Right cardiac atrium (tissue), 5 donors: ENCODE measurements at regions of chr16 and their contacts with region 1.

Region 1: GRCh38 chr16:56041686-56042085 is 149.6 kb upstream of the GNAO1 start:
- DNase-seq: peak in 2 of 3 donors; percentile 43 to 48
- ATAC-seq: peak; percentile 74
- H3K4me3 ChIP-seq: no peak overlapping the region
- H3K27ac ChIP-seq: no peak overlapping the region
- H3K4me1 ChIP-seq: peaks cover 3% of the 10 kb centered on the region
- H3K27me3 ChIP-seq: no peaks in the 10 kb centered on the region

Region 2: DNA sequence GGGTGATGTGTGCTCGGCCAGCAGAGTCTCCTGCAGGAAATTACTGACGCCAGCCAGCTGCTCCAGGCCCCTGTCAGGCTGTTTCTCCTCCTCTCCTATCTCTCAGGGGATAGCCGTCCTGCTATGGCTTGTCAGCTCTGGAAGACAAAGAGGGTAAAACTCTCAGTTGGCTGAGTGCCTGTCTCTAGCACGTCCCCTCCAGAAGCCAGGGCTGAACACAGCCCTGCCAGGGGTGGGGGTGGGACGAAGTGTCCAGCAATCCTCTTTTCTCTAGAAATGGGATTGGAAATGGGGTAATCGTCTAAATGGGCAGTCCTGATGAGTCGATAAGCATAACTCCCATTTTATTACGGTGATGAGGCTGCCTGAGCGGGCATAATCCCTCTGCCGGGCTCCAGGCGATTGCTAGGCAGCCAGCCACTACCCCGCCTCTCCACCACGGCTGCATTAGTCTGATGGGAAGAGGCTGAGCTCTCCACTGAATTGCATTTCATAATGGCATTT is 60.5 kb after region 1 on chr16:
- intact Hi-C with region 1: no loop called
- DNase-seq: peak; percentile 81 to 88 (median 84)
- ATAC-seq: peak; percentile 92 to 93
- H3K4me3 ChIP-seq: peak overlapping the region; percentile 11
- H3K27ac ChIP-seq: peak overlapping the region; percentile 95
- H3K4me1 ChIP-seq: no peaks in the 10 kb centered on the region
- H3K27me3 ChIP-seq: no peaks in the 10 kb centered on the region

Region 3: DNA sequence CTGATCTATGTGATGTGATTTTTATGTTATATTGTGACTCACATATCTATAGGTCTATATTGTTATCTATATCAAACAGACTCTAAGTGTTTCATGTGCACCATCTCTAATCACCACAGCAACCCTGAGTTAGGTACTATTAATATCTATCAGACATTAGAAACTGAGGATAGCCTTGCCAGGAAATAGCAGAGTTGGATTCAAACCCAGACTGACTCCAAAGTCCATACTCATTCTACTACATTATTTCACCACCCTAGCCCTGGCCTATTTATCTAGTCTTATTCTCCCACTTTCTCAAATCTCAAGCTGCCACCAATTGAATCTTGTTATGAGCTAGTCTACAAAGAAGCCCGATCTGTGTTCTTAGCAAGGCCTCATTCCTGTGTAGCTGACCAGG is 84.2 kb after region 1 on chr16:
- intact Hi-C with region 1: no loop called
- DNase-seq: no peak
- ATAC-seq: no peak
- H3K4me3 ChIP-seq: no peak overlapping the region
- H3K27ac ChIP-seq: no peak overlapping the region
- H3K4me1 ChIP-seq: no peaks in the 10 kb centered on the region
- H3K27me3 ChIP-seq: no peaks in the 10 kb centered on the region

Region 4: GRCh38 chr16:56262148-56262547 is 220.5 kb after region 1 on chr16:
- intact Hi-C with region 1: loop called in 1 of 4 experiments (anchors 10 kb)
- DNase-seq: no peak
- ATAC-seq: no peak
- H3K4me3 ChIP-seq: no peak overlapping the region
- H3K27ac ChIP-seq: peak overlapping the region; percentile 39
- H3K4me1 ChIP-seq: peaks cover 47% of the 10 kb centered on the region
- H3K27me3 ChIP-seq: no peaks in the 10 kb centered on the region

Region 5: DNA sequence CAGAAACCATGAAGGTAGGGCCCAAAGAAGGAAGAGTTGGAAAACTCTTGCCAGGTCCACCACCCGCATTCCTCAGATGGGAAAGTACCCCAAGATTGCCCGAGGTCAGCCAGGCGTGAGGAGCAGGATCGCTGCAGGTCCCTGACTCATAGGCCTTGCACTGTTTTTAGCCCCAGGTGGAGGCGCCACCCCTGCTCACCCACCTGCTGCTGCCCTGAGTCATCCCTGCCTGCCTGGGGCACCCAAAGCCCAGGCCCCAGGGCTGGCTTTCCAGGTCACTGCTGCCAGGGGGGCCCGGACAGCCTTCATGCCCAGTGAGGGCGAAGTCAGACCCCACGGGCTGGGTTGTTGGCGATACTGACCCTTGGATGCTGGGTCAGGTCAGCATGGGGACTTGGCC is 282.7 kb after region 1 on chr16:
- intact Hi-C with region 1: loop called in 2 of 4 experiments (anchors 10 kb)
- DNase-seq: peak in 2 of 3 donors; percentile 30 to 37
- ATAC-seq: no peak
- H3K4me3 ChIP-seq: no peak overlapping the region
- H3K27ac ChIP-seq: no peak overlapping the region
- H3K4me1 ChIP-seq: no peaks in the 10 kb centered on the region
- H3K27me3 ChIP-seq: no peaks in the 10 kb centered on the region